ENCODE measurements at regions of chr7 and their contacts with region 1.

Region 1: DNA sequence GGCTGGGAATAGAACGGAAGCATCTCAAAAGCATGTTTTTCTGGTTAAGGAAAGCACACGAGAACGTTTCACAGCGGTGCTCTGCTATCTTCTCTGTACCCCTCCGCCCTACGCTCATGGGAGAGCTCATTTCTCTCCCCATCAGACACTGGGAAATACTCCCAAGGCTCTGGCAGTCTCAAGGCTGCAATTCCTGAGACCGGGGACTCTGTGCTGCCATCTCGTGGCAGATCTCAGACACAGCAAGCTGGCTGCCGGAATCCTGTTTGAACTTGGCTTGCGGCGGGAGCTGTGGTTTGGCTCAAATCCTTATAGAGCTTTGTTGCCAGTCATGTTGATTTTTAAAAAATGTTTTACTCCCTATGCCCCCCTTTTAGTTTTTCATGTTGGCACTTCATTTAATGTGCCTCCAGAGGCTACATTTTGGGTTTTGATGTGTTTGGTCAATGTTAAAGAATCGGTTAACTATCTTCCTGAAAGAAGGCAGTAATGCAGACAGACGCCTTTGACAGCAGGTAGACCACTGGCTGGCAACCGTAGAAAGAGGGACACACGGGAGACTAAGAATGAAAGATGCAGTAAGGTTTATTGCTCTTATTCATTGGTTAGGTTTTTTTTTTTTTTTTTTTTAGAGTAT is 27.6 kb downstream of the BMPER start:
- DNase-seq: peak; percentile 90

Region 2: DNA sequence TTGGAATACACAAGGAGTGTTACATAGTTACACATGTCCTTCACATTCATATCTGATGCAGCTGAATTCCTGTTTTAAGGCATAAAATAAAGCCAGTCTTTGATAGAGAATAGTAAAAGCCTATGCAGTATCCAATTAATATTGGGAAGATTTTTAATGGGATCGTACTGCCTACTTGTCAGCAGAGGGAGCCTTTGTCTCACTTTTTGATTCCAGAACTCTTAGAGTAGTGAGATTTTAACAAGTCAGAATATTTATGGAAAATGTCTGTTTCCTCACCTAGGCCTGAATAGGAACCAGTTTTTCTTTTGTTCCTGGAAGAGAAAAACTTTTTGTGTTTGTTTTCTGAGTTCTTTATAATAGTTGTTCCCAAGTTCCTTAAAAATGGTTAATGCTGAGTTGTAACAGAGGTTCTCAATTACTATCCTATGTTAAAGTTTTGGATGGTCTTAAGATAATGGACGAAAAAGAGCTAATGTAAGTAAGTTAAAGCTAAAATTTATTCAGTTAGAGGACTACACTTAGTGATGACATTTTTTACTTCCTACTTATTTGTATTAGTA is 689.5 kb before region 1 on chr7:
- intact Hi-C with region 1: loop called in 1 of 2 experiments (anchors 10 kb)
- DNase-seq: no peak

Region 3: GRCh38 chr7:33904681-33905388 is 28.1 kb before region 1 on chr7:
- intact Hi-C with region 1: no loop called
- DNase-seq: peak; percentile 83

Measured in posterior vena cava (tissue), 2 donors.